ENCODE measurements at regions of chr11 and their contacts with region 1.

Region 1: DNA sequence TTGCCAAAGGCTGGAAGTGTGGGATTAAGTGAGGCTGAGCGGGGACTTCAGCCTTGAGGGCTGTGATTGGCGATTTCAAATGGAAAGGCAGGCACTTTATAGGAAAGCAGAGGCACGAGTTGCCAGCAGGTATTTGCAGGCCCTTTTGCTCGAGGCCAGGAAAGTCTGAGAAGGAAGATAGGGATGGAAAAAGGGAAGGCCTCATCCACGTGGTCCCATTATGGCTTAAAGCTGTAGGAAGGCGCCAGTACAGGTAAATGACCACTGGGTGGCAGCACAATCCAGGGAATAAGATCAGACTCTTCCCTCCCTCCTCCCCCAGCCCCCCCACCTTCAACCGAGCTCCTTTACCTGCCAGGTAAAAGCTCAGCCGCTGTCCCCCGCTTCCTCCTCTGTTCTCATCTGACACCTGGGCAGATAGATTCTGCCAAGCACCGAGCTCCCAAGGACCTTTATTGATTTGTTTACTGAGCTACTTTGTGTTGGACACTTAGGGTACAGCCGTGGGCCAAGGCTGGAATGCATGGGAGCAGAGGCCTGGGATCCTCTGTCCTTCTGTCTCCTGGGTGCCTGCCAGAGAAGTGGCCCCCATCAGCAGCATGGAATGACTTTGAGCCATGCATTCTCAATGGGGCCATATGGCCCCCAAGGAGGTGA is 7.5 kb downstream of the P2RX3 start:
- DNase-seq: peak; percentile 59 to 74 (median 63)
- H3K4me3 ChIP-seq: no peak overlapping the region
- H3K4me3 Mint-ChIP-seq: no peak overlapping the region
- H3K27ac ChIP-seq: no peak overlapping the region
- H3K27ac Mint-ChIP-seq: no peak overlapping the region
- H3K4me1 ChIP-seq: peaks cover 4% of the 10 kb centered on the region
- H3K4me1 Mint-ChIP-seq: peaks cover 0 to 5% (median 3%) of the 10 kb centered on the region in 4 donors
- H3K27me3 ChIP-seq: no peaks in the 10 kb centered on the region
- H3K27me3 Mint-ChIP-seq: peaks cover 2% of the 10 kb centered on the region in 2 donors

Region 2: DNA sequence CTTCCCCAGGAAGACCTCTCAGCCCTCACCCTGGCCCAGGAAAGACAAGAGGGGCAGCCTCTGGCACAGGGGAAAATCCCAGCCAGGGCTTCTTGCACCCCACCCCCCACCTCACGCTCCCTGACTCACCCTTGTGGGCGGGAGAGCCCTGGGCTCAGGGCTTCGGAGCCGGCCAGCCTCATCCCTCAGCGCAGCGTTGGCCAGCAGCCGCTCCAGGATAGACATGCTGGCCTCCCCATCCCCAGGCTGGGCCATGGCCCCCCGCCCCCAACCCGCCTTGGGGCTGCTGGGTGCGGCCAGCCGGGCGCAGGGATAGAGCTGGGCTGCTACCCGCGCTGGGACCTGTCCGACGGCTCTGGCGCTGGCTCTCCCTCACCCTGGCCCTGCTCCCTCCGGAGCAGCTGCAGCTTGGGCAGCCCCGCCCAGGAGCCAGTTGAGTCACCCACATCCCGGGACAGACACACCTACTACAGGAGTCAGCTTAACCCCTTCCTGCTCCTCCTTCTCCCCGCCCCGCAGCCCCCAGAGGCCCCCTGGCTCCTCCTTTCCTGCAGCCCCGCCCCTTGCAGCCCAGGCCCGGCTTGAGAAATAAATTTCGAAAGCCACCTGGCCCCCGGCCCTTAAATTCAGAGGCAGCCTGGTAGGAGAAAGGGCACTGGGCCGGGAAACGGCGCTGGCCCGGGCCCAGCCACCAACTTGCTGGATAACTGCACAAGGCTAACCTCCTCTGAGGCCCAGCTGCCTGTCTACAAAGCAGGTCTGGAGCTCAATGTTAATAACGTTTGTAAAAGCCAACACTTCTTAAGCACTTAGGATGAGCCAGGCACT is 34.4 kb before region 1 on chr11:
- CTCF ChIA-PET with region 1: no interaction called
- POLR2A ChIA-PET with region 1: no interaction called
- intact Hi-C with region 1: no loop called
- DNase-seq: peak in 1 of 5 donors; percentile 46
- H3K4me3 ChIP-seq: no peak overlapping the region
- H3K4me3 Mint-ChIP-seq: peak overlapping the region; percentile 3 to 72 (median 48)
- H3K27ac ChIP-seq: no peak overlapping the region
- H3K27ac Mint-ChIP-seq: peak overlapping the region in 1 of 7 donors; percentile 8
- H3K4me1 ChIP-seq: peaks cover 17% of the 10 kb centered on the region
- H3K4me1 Mint-ChIP-seq: peaks cover 6 to 13% (median 9%) of the 10 kb centered on the region in 4 donors
- H3K27me3 ChIP-seq: no peaks in the 10 kb centered on the region
- H3K27me3 Mint-ChIP-seq: peaks cover 0 to 2% of the 10 kb centered on the region in 2 donors

Region 3: GRCh38 chr11:57358543-57358961 is 12.9 kb after region 1 on chr11:
- CTCF ChIA-PET with region 1: interaction called, 70 read pairs
- POLR2A ChIA-PET with region 1: no interaction called
- intact Hi-C with region 1: no loop called
- DNase-seq: no peak
- H3K4me3 ChIP-seq: no peak overlapping the region
- H3K4me3 Mint-ChIP-seq: no peak overlapping the region
- H3K27ac ChIP-seq: no peak overlapping the region
- H3K27ac Mint-ChIP-seq: peak overlapping the region in 1 of 7 donors; percentile 36
- H3K4me1 ChIP-seq: no peaks in the 10 kb centered on the region
- H3K4me1 Mint-ChIP-seq: no peaks in the 10 kb centered on the region
- H3K27me3 ChIP-seq: no peaks in the 10 kb centered on the region
- H3K27me3 Mint-ChIP-seq: peaks cover 7 to 16% of the 10 kb centered on the region in 2 donors

Region 4: DNA sequence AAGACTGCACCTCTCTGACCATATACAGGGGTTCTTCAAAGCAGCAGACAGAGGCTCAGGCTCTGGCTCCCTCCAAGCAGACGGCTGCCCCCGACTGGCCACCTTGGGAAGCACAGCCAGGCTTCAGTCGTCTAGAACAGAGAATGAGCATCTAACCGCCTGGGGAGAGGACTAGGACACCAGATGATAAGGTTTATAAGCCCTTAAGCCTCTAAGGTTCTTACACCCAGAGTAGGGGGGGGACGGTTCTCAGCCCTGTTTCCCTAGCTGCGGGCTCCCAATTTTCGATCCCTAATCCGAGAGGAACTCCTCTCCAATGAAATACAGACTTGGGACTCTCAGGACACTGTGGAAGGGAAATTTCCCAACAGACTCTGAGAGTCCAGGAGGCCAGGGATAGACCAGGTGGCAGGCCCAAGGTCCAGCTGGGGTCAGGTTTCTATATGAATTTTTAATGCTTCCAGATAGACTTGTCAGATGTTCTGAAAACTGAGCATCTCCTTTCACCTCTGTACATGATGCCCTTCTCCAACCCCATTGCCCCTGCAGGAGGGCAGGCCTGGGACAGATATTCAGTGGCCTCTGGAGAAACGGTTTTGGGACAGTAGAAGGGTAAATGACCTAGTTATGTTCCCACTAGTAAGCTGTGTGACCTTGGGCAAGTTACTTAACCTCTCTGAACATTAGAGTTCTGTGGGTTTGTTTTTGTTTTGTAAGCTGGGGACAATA is 134.9 kb after region 1 on chr11:
- CTCF ChIA-PET with region 1: interaction called, 8 read pairs
- POLR2A ChIA-PET with region 1: no interaction called
- intact Hi-C with region 1: loop called (anchors 2 kb)
- DNase-seq: peak; percentile 40 to 58 (median 41)
- H3K4me3 ChIP-seq: no peak overlapping the region
- H3K4me3 Mint-ChIP-seq: peak overlapping the region in 1 of 8 donors; percentile 57
- H3K27ac ChIP-seq: no peak overlapping the region
- H3K27ac Mint-ChIP-seq: peak overlapping the region in 3 of 7 donors; percentile 46 to 73 (median 54)
- H3K4me1 ChIP-seq: peaks cover 17% of the 10 kb centered on the region
- H3K4me1 Mint-ChIP-seq: peaks cover 8 to 39% (median 16%) of the 10 kb centered on the region in 4 donors
- H3K27me3 ChIP-seq: peaks cover 7% of the 10 kb centered on the region
- H3K27me3 Mint-ChIP-seq: peaks cover 6 to 10% of the 10 kb centered on the region in 2 donors

Region 5: GRCh38 chr11:57546869-57547475 is 201.3 kb after region 1 on chr11:
- CTCF ChIA-PET with region 1: no interaction called
- POLR2A ChIA-PET with region 1: no interaction called
- intact Hi-C with region 1: no loop called
- DNase-seq: no peak
- H3K4me3 ChIP-seq: no peak overlapping the region
- H3K4me3 Mint-ChIP-seq: no peak overlapping the region
- H3K27ac ChIP-seq: no peak overlapping the region
- H3K27ac Mint-ChIP-seq: peak overlapping the region in 4 of 7 donors; percentile 25 to 68 (median 58)
- H3K4me1 ChIP-seq: no peaks in the 10 kb centered on the region
- H3K4me1 Mint-ChIP-seq: peaks cover 0 to 2% (median 0%) of the 10 kb centered on the region in 4 donors
- H3K27me3 ChIP-seq: no peaks in the 10 kb centered on the region
- H3K27me3 Mint-ChIP-seq: no peaks in the 10 kb centered on the region

Region 6: DNA sequence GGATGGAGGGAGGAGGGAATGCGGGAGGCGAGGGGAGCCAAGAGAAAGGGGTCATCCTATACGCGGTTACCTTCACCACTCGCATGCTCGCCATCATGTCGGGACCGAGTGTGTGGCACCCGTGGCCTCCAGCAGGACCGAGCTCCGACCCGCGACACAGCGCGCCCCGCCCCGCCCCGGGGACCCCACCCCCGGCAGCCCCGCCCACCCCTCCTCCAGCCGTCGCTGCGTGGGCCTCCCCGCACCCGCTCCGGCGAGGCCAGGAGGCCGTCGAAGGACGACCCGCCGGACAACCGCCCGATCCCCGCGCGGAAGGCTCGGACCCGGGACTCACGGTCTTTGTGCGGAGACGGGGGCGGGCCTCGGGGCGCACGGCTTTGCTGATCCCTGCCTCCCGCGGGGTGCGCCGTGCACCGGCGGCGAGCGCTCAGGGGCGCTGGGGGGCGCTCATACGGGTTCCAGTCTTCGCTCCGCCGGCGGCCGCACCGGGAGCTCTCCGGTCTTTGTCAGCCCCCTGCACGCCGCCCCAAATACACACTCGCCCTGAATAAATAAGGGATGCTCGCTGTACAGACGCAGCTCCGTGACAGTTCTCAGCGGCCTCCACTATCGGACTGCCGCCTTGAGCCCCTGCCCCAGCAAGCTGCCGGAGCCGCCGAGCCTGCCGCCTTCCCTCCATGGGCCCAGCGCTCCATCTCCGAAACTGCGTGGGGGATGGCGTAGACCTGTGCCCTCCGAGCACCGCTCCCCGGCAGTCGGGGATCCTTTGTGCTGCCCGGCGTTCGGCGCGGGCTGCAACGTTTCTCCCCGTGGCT is 222.0 kb after region 1 on chr11 and contains the start of gene UBE2L6:
- CTCF ChIA-PET with region 1: interaction called, 3 read pairs
- POLR2A ChIA-PET with region 1: no interaction called
- intact Hi-C with region 1: loop called (anchors 5 kb)
- DNase-seq: peak; percentile 59 to 86 (median 66)
- H3K4me3 ChIP-seq: peak within 1 kb of the TSS; percentile 72 to 81
- H3K4me3 Mint-ChIP-seq: peak within 1 kb of the TSS; percentile 94 to 100 (median 99)
- H3K27ac ChIP-seq: peak within 1 kb of the TSS; percentile 93
- H3K27ac Mint-ChIP-seq: peak within 1 kb of the TSS; percentile 97 to 99 (median 98)
- H3K4me1 ChIP-seq: peaks cover 34% of the 10 kb centered on the region
- H3K4me1 Mint-ChIP-seq: peaks cover 27 to 65% (median 42%) of the 10 kb centered on the region in 4 donors
- H3K27me3 ChIP-seq: no peaks in the 10 kb centered on the region
- H3K27me3 Mint-ChIP-seq: no peaks in the 10 kb centered on the region
- total RNA-seq, gene UBE2L6: 79.7 to 82.9 TPM

Region 7: DNA sequence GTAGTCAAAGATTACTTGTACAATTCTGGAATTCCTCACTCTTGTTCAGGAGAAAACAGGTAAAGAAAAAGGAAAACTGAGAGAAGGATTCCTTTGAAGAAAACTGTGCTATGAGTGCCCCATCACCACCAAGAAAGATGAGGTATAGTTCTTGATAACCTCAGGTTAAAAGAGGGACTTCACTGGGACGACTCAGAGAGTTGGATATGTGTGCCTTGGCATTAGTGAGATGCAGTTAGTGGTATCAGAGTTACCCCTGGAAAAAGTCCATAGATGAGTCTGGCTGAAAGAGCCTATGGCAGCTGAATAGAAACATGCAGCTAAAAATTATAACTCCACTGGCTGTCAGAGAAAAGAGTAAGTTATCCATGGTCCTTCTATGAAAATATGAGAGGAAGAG is 1201.2 kb after region 1 on chr11:
- CTCF ChIA-PET with region 1: no interaction called
- POLR2A ChIA-PET with region 1: no interaction called
- intact Hi-C with region 1: no loop called
- DNase-seq: no peak
- H3K4me3 ChIP-seq: no peak overlapping the region
- H3K4me3 Mint-ChIP-seq: no peak overlapping the region
- H3K27ac ChIP-seq: no peak overlapping the region
- H3K27ac Mint-ChIP-seq: peak overlapping the region in 5 of 7 donors; percentile 29 to 84 (median 73)
- H3K4me1 ChIP-seq: no peaks in the 10 kb centered on the region
- H3K4me1 Mint-ChIP-seq: peaks cover 8 to 33% (median 11%) of the 10 kb centered on the region in 4 donors
- H3K27me3 ChIP-seq: no peaks in the 10 kb centered on the region
- H3K27me3 Mint-ChIP-seq: no peaks in the 10 kb centered on the region

Region 8: GRCh38 chr11:58573451-58574104 is 1227.9 kb after region 1 on chr11:
- CTCF ChIA-PET with region 1: no interaction called
- POLR2A ChIA-PET with region 1: no interaction called
- intact Hi-C with region 1: loop called (anchors 5 kb)
- DNase-seq: peak; percentile 50 to 84 (median 58)
- H3K4me3 ChIP-seq: peak overlapping the region; percentile 76 to 96
- H3K4me3 Mint-ChIP-seq: peak overlapping the region; percentile 92 to 99 (median 95)
- H3K27ac ChIP-seq: peak overlapping the region; percentile 99
- H3K27ac Mint-ChIP-seq: peak overlapping the region; percentile 99 to 100 (median 100)
- H3K4me1 ChIP-seq: peaks cover 66% of the 10 kb centered on the region
- H3K4me1 Mint-ChIP-seq: peaks cover 33 to 83% (median 57%) of the 10 kb centered on the region in 4 donors
- H3K27me3 ChIP-seq: no peaks in the 10 kb centered on the region
- H3K27me3 Mint-ChIP-seq: peaks cover 0 to 3% of the 10 kb centered on the region in 2 donors

Region 9: DNA sequence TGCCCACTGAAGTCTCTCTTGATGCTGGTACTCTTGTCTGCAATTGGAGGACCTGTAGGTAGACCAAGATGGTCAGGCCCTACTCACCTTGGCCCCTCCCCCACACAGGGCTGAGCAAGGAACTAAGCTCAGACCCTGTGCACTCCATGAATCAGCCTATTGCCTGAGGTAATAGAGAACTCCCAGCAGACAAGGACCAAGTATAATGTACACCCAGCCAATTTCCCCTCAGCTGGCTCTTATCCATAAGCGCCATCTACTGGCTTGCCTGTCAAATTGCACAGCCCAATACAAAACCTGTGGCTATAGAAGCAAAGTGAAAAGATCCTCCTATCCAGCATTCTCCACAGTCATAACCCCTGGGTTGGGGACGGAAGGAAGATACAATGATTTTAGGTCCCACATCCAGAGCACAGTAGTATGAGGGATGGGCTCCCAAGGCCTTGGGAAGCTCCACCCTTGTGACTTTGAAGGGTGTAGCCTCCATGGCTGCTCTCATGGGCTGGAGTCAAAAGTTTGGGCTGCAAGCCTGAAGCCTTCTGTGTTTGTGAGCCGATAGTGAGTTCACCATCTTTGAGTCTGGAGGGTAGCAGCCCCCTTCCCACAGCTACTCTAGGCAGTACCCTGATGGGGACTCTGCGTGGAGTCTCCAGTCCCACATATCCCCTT is 1442.8 kb after region 1 on chr11:
- CTCF ChIA-PET with region 1: no interaction called
- POLR2A ChIA-PET with region 1: no interaction called
- intact Hi-C with region 1: loop called (anchors 5 kb)
- DNase-seq: peak in 4 of 5 donors; percentile 36 to 49 (median 42)
- H3K4me3 ChIP-seq: no peak overlapping the region
- H3K4me3 Mint-ChIP-seq: no peak overlapping the region
- H3K27ac ChIP-seq: no peak overlapping the region
- H3K27ac Mint-ChIP-seq: no peak overlapping the region
- H3K4me1 ChIP-seq: no peaks in the 10 kb centered on the region
- H3K4me1 Mint-ChIP-seq: no peaks in the 10 kb centered on the region
- H3K27me3 ChIP-seq: no peaks in the 10 kb centered on the region
- H3K27me3 Mint-ChIP-seq: peaks cover 4 to 8% of the 10 kb centered on the region in 2 donors